K562 (cell line): ENCODE measurements at regions of chr22 and their contacts with region 1.

Region 1: GRCh38 chr22:39532215-39533071 is at the start of gene RPS19BP1:
- DNase-seq: peak; percentile 83 to 99 (median 88)
- ATAC-seq: peak; percentile 89
- H3K4me3 ChIP-seq: peak within 1 kb of the TSS; percentile 97
- H3K27ac ChIP-seq: peak within 1 kb of the TSS; percentile 92
- H3K4me1 ChIP-seq: peaks cover 29 to 58% of the 10 kb centered on the region in 2 experiments; a peak in 4 of 5 replicates
- H3K27me3 ChIP-seq: no peaks in the 10 kb centered on the region
- CTCF ChIP-seq: no peak
- EP300 ChIP-seq: no peak
- POLR2A ChIP-seq: peak; percentile 88
- RAD21 ChIP-seq: no peak
- polyA plus RNA-seq, gene RPS19BP1: 3.0 to 8.2 TPM

Region 2: DNA sequence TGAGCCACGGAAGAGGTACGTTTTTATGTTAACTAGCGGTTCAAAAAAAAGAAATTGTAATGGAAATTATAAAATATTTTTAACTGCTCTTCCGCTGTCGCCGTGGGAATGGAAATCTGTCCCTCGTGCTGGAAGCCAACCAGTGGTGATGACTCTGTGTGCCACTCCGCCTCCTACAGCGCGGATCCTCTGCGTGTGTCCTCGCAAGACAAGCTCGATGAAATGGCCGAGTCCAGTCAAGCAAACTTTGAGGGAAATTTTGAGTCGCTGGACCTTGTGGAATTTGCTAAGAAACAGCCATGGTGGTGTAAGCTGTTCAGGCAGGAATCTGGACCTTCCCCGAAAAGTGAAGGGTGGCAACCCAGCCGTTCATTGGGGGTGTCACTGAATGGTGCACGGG is 377.0 kb before region 1 on chr22:
- CTCF ChIA-PET with region 1: no interaction called
- POLR2A ChIA-PET with region 1: no interaction called
- in situ Hi-C with region 1: loop called (anchors 5 kb)
- intact Hi-C with region 1: no loop called
- DNase-seq: no peak
- ATAC-seq: no peak
- H3K4me3 ChIP-seq: no peak overlapping the region
- H3K27ac ChIP-seq: no peak overlapping the region
- H3K4me1 ChIP-seq: peaks cover 0 to 15% of the 10 kb centered on the region in 2 experiments; a peak in 3 of 5 replicates
- H3K27me3 ChIP-seq: no peaks in the 10 kb centered on the region
- CTCF ChIP-seq: no peak
- EP300 ChIP-seq: no peak
- POLR2A ChIP-seq: no peak
- RAD21 ChIP-seq: no peak

Region 3: GRCh38 chr22:39490135-39490798 is 42.2 kb before region 1 on chr22:
- CTCF ChIA-PET with region 1: interaction called, 18 read pairs
- POLR2A ChIA-PET with region 1: interaction called, 3 read pairs
- in situ Hi-C with region 1: no loop called
- intact Hi-C with region 1: loop called (anchors 5 kb)
- DNase-seq: peak; percentile 82 to 90 (median 84)
- ATAC-seq: peak; percentile 95
- H3K4me3 ChIP-seq: no peak overlapping the region
- H3K27ac ChIP-seq: no peak overlapping the region; the same call in 2 of the 3 replicates
- H3K4me1 ChIP-seq: peaks cover 37 to 49% of the 10 kb centered on the region in 2 experiments
- H3K27me3 ChIP-seq: no peaks in the 10 kb centered on the region
- CTCF ChIP-seq: no peak
- EP300 ChIP-seq: no peak
- POLR2A ChIP-seq: no peak
- RAD21 ChIP-seq: no peak

Region 4: DNA sequence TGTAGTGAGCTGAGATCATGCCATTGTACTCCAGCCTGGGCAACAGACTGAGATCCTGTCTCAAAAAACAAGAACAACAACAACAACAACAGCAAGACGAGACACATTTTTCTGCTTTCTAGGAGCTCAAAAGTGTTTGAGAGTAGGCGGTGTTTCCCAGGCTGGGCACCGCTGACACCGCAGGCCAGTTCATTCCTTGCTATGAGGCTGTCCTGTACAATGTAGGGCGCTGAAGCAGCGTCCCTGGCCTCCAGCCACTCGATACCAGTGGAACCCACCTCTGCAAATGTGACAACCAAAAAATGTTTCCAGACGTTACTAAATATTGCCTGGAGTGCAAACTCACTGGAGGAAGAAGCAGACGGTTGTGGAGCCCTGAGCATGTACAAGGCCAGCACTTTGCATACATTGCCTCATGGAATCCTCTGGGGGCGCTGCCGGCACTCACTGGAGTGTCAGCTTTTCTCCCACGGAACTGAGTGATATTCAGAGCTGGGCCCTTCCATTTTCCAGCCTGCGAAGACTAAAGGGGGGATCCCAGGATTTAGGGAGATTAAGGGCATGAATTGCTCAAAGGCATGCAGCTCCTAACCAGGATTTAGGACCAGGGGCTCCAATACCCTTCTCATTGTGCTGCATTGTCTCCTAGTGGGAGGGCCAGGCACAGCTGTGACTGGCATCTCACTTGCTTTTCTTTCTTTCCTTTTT is 36.2 kb before region 1 on chr22:
- CTCF ChIA-PET with region 1: interaction called, 18 read pairs
- POLR2A ChIA-PET with region 1: interaction called, 5 read pairs
- in situ Hi-C with region 1: no loop called
- intact Hi-C with region 1: loop called (anchors 5 kb)
- DNase-seq: peak; percentile 37 to 85 (median 48)
- ATAC-seq: peak; percentile 91
- H3K4me3 ChIP-seq: no peak overlapping the region
- H3K27ac ChIP-seq: peak overlapping the region; percentile 44; the same call in 2 of the 3 replicates
- H3K4me1 ChIP-seq: peaks cover 18 to 25% of the 10 kb centered on the region in 2 experiments
- H3K27me3 ChIP-seq: no peaks in the 10 kb centered on the region
- CTCF ChIP-seq: peak; percentile 77 to 84 (median 82)
- EP300 ChIP-seq: no peak
- POLR2A ChIP-seq: no peak
- RAD21 ChIP-seq: peak; percentile 16 to 51; a peak in 2 of 4 replicates

Region 5: DNA sequence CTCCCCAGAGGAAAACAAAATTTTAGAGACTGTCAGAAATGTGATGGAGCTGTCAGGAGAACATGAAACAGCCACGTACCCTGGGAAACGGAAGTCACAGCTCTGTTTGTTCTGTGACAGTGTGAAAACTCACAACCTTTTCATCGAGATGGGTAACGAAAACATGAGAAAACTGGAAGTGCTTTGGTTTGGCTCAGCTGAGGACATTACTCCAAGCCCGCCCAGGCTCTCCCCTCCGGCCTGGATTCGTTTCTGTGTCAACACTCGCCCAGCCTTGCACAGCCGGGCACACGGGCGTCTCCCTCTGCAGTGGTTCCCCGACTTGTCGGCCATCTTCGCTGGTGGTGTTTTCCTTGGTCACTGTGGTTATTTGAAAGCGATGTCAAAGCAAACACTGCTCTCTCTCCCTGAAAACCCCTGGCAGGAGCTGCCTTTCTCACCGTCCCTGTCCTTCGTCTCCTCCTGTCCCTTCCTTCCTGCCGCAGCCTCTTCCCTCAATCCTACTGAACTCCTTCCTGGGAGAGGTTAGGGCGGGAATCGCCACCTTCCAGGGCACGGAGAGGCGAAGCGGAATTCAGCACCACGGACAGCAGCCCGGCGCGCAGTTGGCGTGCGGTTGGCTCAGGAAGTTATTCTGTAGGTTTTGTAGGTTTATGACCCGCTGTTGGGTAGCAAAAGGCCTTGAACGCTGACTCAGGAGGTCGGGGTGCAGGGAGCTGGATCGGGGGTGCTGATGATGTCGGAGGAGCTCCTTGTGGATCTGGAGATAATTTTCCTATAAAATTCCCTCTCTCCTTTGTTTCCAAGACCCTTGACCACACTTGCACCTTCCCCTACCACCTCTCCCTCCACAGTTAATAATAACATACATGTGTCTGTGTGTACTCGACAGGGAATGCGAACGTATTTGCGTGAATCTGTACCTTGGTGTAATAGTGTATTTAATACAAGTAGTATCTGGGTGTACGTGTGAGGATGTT is 13.2 kb after region 1 on chr22:
- CTCF ChIA-PET with region 1: no interaction called
- POLR2A ChIA-PET with region 1: no interaction called
- in situ Hi-C with region 1: no loop called
- intact Hi-C with region 1: no loop called
- DNase-seq: peak; percentile 49 to 66 (median 62)
- ATAC-seq: peak; percentile 81
- H3K4me3 ChIP-seq: no peak overlapping the region
- H3K27ac ChIP-seq: no peak overlapping the region
- H3K4me1 ChIP-seq: peaks cover 0 to 6% of the 10 kb centered on the region in 2 experiments; a peak in 1 of 5 replicates
- H3K27me3 ChIP-seq: peaks cover 0 to 29% of the 10 kb centered on the region in 2 experiments; a peak in 3 of 5 replicates
- CTCF ChIP-seq: no peak
- EP300 ChIP-seq: no peak
- POLR2A ChIP-seq: no peak
- RAD21 ChIP-seq: no peak

Region 6: GRCh38 chr22:39773976-39774539 is 241.6 kb after region 1 on chr22:
- CTCF ChIA-PET with region 1: no interaction called
- POLR2A ChIA-PET with region 1: no interaction called
- in situ Hi-C with region 1: no loop called
- intact Hi-C with region 1: no loop called
- DNase-seq: peak in 2 of 4 experiments; percentile 39 to 46
- ATAC-seq: peak; percentile 92
- H3K4me3 ChIP-seq: no peak overlapping the region
- H3K27ac ChIP-seq: peak overlapping the region; percentile 61
- H3K4me1 ChIP-seq: peaks cover 0 to 14% of the 10 kb centered on the region in 2 experiments; a peak in 3 of 5 replicates
- H3K27me3 ChIP-seq: no peaks in the 10 kb centered on the region
- CTCF ChIP-seq: no peak
- EP300 ChIP-seq: peak; percentile 87
- POLR2A ChIP-seq: no peak
- RAD21 ChIP-seq: peak in 1 of 2 experiments; percentile 41; a peak in 2 of 4 replicates

Region 7: DNA sequence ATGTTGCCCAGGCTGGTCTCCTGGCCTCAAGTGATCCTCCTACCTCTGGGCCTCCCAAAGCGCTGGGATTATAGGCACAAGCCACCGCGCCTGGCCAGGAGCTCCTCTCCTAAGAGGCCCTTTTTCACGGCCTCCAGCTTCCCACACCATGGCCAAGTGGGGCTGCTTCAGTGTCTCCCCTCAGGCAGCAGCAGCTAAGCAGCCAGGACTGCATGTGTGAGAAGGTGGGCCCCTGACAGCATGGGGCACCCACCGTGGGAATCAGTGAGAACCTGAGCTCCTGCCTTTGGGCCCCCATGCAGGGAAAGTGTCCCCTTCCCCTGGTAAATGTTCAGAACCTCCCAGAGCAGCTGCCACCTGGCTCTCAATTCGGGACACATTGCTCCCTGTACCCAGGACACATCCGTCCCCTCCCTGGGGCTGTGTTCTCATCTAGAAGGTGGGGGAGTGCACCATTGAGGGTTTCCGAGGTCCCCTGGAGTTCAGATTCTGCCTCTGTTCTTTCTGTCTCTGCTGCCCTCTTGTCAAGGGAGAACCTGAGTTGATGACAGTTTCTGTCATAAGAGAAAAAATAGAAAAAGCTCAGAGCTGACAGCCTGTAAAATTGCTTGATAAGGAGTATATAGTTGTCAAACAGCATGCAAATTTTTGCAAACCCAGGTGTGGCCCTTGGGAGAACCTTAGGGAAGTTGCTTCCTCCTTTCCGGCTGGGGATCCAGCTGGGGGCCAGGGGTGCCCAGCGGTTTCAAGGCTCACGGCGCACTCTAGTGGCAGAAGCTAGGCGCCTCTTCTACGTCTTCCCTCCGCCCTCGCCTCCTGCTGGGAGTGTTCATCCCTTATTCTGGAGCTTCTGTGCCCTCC is 492.0 kb after region 1 on chr22:
- CTCF ChIA-PET with region 1: interaction called, 18 read pairs
- POLR2A ChIA-PET with region 1: interaction called, 3 read pairs
- in situ Hi-C with region 1: no loop called
- intact Hi-C with region 1: no loop called
- DNase-seq: peak; percentile 81 to 84 (median 82)
- ATAC-seq: peak; percentile 95
- H3K4me3 ChIP-seq: no peak overlapping the region
- H3K27ac ChIP-seq: no peak overlapping the region
- H3K4me1 ChIP-seq: peaks cover 4 to 28% of the 10 kb centered on the region in 2 experiments; a peak in 4 of 5 replicates
- H3K27me3 ChIP-seq: no peaks in the 10 kb centered on the region
- CTCF ChIP-seq: peak; percentile 83 to 95 (median 91)
- EP300 ChIP-seq: no peak
- POLR2A ChIP-seq: no peak
- RAD21 ChIP-seq: peak; percentile 90 to 96

Region 8: DNA sequence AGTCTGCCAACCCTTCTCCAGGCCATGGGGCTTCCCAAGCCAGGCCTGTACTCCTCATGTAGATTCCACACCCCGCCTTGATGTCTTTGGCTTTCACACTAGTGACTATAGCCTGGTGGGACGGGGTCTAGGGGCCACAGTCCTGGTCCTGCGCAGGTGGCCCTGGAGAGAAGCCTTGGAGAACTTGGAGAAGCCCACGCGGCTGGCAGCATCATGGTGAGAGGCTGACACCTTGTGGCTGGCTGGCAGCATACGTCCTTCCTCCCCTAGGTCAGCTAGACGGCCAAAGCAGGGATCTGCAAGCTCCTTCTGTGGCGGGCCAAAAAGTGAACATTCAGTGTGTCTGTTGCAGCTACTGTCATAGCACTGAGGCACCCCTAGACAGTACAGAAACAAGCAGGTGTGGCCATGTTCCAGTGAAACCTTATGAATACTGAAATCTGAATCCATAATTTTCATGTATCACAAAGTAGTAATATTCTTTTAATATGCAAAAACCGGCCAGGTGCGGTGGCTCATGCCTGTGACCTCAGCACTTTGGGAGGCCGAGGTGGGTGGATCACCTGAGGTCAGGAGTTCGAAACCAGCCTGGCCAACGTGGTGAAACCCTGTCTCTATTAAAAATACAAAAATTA is 504.3 kb after region 1 on chr22:
- CTCF ChIA-PET with region 1: interaction called, 8 read pairs
- POLR2A ChIA-PET with region 1: interaction called, 4 read pairs
- in situ Hi-C with region 1: no loop called
- intact Hi-C with region 1: loop called (anchors 5 kb)
- DNase-seq: peak; percentile 63 to 81 (median 69)
- ATAC-seq: peak; percentile 92
- H3K4me3 ChIP-seq: no peak overlapping the region
- H3K27ac ChIP-seq: no peak overlapping the region
- H3K4me1 ChIP-seq: peaks cover 0 to 25% of the 10 kb centered on the region in 2 experiments; a peak in 4 of 5 replicates
- H3K27me3 ChIP-seq: no peaks in the 10 kb centered on the region
- CTCF ChIP-seq: peak; percentile 80 to 86 (median 80)
- EP300 ChIP-seq: no peak
- POLR2A ChIP-seq: no peak
- RAD21 ChIP-seq: peak; percentile 87 to 88

Region 9: DNA sequence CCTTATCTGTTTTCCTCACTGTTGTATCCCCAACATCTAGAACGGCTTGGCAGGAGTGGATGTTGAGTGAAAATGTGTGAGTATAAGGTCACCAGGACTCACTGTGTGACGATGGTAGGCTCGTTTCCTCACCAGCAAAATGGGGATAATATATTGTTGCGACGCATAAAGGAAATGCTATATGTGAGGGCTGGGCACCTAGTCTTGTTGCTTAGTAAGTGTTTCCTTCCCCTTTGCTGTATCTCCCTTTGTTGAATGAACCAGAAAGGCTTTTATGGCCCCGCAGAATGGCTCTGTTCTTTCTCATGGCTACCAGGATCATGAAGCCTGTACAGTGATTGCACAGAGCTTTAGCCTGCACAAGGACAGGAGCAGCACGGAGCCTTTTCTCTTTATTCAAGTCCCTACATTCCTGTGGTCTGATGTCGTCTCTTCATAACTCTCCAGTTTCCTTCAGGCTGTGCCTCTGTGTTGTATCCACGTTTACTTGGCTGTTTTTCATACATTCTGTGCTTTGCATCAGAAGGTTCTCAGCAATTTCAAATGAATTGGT is 650.7 kb after region 1 on chr22:
- CTCF ChIA-PET with region 1: no interaction called
- POLR2A ChIA-PET with region 1: interaction called, 3 read pairs
- in situ Hi-C with region 1: loop called (anchors 10 kb)
- intact Hi-C with region 1: no loop called
- DNase-seq: peak in 1 of 4 experiments; percentile 35
- ATAC-seq: peak; percentile 23
- H3K4me3 ChIP-seq: peak overlapping the region; percentile 9; the same call in 1 of the 2 replicates
- H3K27ac ChIP-seq: peak overlapping the region; percentile 74
- H3K4me1 ChIP-seq: peaks cover 11 to 49% of the 10 kb centered on the region in 2 experiments; a peak in 4 of 5 replicates
- H3K27me3 ChIP-seq: no peaks in the 10 kb centered on the region
- CTCF ChIP-seq: no peak
- EP300 ChIP-seq: no peak
- POLR2A ChIP-seq: no peak
- RAD21 ChIP-seq: no peak